Right ventricle myocardium inferior (tissue), 1 donor: ENCODE measurements at regions of chr13 and their contacts with region 1.

Region 1: GRCh38 chr13:50801087-50801931 is 42.2 kb downstream of the DLEU7 start:
- DNase-seq: no peak
- ATAC-seq: peak; percentile 93

Region 2: DNA sequence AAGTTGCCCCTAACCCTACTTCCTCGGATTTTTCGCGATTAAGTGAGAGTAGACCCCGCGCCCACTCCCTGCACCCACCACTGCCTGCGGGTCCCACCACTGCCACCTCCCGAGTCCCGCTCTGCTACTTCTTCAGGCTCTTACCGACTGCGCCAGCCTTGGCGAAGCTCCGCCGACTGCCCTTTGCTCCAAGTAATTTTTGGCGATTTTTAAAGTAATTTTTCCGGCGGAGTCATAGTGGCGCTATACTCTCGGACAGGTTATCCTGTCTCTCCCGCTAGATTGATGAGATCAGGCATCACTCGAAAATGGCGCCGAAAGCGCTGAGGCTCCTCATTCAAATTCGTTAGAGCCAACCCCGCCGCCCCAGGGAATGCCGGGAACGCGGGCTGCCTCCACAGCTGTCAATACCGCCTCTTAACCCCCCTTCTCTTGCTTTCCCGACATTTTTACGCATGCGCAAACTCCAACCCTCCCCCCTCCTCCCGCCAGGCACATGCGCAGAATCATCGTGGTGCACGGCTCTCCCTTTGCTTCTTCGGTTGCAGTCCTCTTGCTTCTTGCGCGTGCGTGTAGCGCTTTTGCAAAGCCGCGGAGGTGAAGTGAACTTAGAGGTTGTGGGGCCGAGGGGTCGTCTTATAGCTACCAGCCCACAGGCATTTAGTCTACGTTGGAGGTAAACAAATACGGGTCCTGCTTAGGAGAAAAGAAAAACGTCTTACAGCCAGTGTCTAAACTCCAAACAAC is 719.5 kb before region 1 on chr13:
- intact Hi-C with region 1: loop called (anchors 5 kb)
- DNase-seq: peak; percentile 98
- ATAC-seq: peak; percentile 97

Region 3: DNA sequence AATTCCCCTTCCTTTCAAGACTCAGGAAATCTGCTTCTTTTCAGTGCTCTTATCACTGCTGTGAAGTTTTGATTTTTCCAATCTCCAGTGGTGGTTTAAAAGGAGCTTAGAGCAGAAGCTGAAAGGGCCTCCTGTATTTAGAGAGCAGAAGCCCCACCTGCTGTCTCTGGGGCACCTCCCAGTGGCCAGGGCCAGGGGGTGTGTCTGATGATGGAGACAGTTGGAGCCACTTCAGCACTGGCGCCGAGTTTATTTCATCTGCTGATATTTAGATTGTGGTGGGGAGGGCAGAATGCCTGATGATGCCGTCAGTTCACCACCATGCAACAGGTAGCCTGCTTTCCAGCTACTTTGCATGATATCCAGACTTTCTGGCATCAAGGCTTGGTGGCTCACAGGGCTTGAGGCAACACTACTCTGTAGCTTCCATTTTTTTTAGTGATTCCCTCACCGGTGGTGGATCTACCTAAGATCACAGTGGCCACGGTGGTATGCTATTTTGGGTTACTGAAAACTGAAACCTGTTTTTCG is 414.2 kb before region 1 on chr13:
- intact Hi-C with region 1: loop called (anchors 5 kb)
- DNase-seq: peak; percentile 77
- ATAC-seq: peak; percentile 94

Region 4: DNA sequence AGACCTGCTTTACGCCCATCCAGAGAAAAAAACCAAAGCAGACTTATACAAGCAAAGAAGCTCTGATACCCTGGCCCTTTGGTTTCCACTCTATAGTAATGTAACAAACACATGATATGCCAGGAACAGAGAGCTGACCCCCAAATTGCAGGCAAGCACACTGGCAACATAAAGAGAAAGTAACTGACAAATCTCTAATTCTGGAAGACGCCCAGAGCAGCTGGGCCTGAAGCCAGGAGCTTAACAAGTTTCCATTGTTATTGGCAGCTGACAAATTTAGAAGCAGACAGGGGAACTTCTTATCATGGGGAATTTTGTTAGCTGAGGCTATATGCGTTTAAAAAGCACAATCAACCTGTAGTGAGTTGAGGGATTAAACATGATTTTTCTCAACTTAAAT is 115.8 kb before region 1 on chr13:
- intact Hi-C with region 1: loop called (anchors 5 kb)
- DNase-seq: peak; percentile 83
- ATAC-seq: peak; percentile 59